HepG2 (cell line): ENCODE measurements at regions of chr16 and their contacts with region 1.

Region 1: GRCh38 chr16:66751303-66751991 is at the start of gene DYNC1LI2:
- DNase-seq: peak; percentile 55
- ATAC-seq: peak; percentile 88
- H3K4me3 ChIP-seq: peak within 1 kb of the TSS; percentile 77 to 94 (median 89)
- H3K27ac ChIP-seq: peak within 1 kb of the TSS; percentile 74
- H3K4me1 ChIP-seq: peaks cover 57% of the 10 kb centered on the region
- H3K27me3 ChIP-seq: no peaks in the 10 kb centered on the region; a peak in 1 of 5 replicates
- CTCF ChIP-seq: peak; percentile 80
- EP300 ChIP-seq: 0 out of 4 replicates have a peak, but pooled peaks of 1 of the 2 experiments have one; percentile 69
- POLR2A ChIP-seq: peak; percentile 59 to 83
- RAD21 ChIP-seq: peak; percentile 90
- total RNA-seq, gene DYNC1LI2: 107 and 135 TPM in 2 replicates

Region 2: GRCh38 chr16:66844342-66845079 is 93.1 kb after region 1 on chr16 and contains the start of gene CA7:
- CTCF ChIA-PET with region 1: no interaction called
- POLR2A ChIA-PET with region 1: no interaction called
- in situ Hi-C with region 1: no loop called
- intact Hi-C with region 1: loop called (anchors 10 kb)
- DNase-seq: no peak
- ATAC-seq: peak; percentile 70
- H3K4me3 ChIP-seq: peak within 1 kb of the TSS; percentile 47 to 74 (median 48); a peak in 5 of 6 replicates
- H3K27ac ChIP-seq: no peak within 1 kb of the TSS
- H3K4me1 ChIP-seq: peaks cover 15% of the 10 kb centered on the region; the same call in 1 of the 2 replicates
- H3K27me3 ChIP-seq: peaks cover 7 to 74% of the 10 kb centered on the region in 2 experiments; a peak in 4 of 5 replicates
- CTCF ChIP-seq: no peak
- EP300 ChIP-seq: no peak
- POLR2A ChIP-seq: no peak
- RAD21 ChIP-seq: no peak
- total RNA-seq, gene CA7: not detected in 2 replicates